ENCODE measurements at regions of chr17 and their contacts with region 1.

Region 1: DNA sequence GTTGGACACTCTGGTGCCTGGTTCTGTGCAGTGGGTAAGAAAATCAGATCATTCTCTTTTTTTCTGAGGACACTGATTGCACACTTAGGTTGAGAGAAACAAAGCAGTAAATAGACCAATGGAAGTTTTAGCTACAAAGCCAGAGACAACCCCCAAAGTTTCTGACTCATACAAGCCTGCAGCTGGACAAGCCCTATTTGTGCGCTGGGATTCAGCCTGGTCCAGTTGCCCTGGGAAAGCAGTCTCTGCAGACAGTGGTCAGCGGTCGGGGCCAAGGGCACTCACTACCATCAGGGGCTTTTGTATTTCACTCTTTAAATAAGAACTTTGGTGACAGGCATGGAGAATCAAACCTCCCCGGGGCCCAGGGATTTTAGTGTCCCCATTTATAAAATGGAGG is 6.0 kb upstream of the RHBDL3 start:
- DNase-seq: no peak
- ATAC-seq: no peak
- H3K4me3 ChIP-seq: no peak overlapping the region
- H3K27ac ChIP-seq: no peak overlapping the region
- H3K4me1 ChIP-seq: peaks cover 15% of the 10 kb centered on the region
- H3K27me3 ChIP-seq: no peaks in the 10 kb centered on the region
- CTCF ChIP-seq: no peak
- POLR2A ChIP-seq: no peak

Region 2: GRCh38 chr17:31888124-31888523 is 371.5 kb before region 1 on chr17:
- intact Hi-C with region 1: no loop called
- DNase-seq: peak in 1 of 4 donors; percentile 34
- ATAC-seq: no peak
- H3K4me3 ChIP-seq: no peak overlapping the region
- H3K27ac ChIP-seq: no peak overlapping the region
- H3K4me1 ChIP-seq: no peaks in the 10 kb centered on the region
- H3K27me3 ChIP-seq: no peaks in the 10 kb centered on the region
- CTCF ChIP-seq: no peak
- POLR2A ChIP-seq: no peak

Region 3: GRCh38 chr17:32323811-32324491 is 64.4 kb after region 1 on chr17:
- intact Hi-C with region 1: loop called (anchors 5 kb)
- DNase-seq: peak; percentile 33 to 59 (median 55)
- ATAC-seq: peak; percentile 81
- H3K4me3 ChIP-seq: no peak overlapping the region
- H3K27ac ChIP-seq: peak overlapping the region in 3 of 4 donors; percentile 52 to 71 (median 66)
- H3K4me1 ChIP-seq: no peaks in the 10 kb centered on the region
- H3K27me3 ChIP-seq: no peaks in the 10 kb centered on the region
- CTCF ChIP-seq: no peak
- POLR2A ChIP-seq: peak in 1 of 3 donors; percentile 17

Measured in body of pancreas (tissue), 4 donors.